ENCODE measurements at regions of chr22 and their contacts with region 1.

Region 1: DNA sequence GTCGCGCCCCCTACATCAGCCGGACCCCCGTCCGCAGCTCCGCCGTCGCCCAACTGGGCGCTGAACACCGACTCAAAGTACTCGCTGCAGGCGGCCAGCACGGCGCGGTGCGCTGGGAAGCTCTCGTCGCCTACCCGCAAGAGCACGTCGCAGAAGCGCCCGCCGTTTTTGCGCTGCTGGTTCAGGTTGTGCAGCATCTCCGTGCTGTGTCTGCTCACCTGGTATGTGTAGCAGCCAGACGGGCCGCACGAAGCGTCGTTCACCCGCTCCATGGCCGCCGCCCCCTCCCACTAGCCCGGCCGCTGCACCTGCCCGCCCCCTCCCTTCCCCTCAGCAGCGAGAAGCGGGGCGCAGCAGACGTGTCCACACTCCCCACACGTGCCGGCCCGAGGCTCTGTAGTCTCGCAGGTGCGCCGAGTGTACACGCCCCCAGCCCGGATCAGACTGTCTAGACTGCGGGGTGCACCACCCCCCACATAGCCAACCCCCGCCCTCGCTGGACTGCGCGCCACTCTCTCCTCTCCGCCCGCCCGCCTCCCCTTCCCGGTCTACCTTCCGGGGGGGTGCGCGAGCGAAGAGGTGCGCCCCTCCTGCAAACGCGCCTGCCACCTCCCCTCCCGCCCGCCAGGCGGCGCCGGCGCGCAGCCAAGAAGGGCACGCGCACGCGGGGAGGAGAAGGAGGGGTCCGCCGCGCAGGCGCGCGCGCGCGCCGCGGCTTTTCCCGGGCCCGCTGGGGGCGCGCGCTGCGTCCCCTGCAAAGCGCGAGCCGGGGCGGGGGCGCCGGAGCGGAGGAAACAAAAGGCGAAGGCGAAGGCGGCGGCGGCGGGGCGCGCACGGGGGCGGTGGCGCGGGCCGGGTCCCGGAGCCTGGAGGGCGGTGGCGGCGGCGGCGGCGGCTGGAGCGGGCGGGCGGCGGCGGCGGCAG is 553 bp downstream of the PATZ1 start:
- DNase-seq: peak; percentile 76
- H3K4me3 ChIP-seq: peak overlapping the region; percentile 49 to 59
- H3K27ac ChIP-seq: peak overlapping the region; percentile 87 to 90
- H3K4me1 ChIP-seq: peaks cover 27% of the 10 kb centered on the region
- H3K27me3 ChIP-seq: no peaks in the 10 kb centered on the region
- CTCF ChIP-seq: peak; percentile 89 to 97 (median 96)
- POLR2A ChIP-seq: peak; percentile 28

Region 2: DNA sequence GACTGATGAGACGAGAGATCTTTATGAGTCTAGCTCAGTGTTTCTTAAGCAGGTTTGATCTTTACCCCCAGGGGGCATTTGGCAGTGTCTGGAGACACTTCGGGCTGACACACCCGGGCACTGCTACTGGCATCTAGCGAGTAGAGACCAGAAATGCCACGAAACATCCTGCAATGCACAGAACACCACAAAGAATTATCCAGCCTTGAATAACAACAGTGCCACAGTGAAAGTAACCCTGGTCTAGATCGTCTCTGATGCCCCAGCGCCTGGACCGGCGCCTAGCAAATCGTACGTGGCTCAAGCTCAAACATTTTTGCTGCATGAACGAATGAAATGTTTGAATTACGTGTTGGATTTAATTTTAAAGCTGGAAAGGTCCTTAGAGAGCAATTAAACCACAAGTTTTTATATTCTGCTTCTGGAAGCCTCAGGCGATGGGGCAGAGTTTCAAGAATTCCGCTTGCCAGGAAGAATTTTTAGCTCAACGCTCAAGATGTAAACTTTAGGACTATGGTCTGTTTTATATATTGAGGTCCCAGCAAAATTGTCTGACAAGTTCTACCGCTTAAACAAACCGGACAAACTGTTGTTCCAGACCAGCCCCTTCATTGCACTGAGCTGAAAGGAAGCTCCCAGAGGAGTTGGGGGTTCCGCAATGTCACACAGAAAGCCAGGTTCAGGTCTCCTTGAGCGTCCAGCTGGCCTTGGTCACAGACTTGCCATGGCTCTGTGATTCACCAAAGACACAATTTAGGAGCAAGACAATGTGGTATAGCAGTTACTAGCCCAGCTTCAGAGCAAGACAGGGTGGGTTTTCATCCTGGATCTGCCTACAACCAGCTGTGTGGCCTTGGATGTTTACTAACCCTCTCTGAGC is 308.7 kb before region 1 on chr22:
- intact Hi-C with region 1: no loop called
- DNase-seq: no peak
- H3K4me3 ChIP-seq: peak overlapping the region in 1 of 2 donors; percentile 8
- H3K27ac ChIP-seq: peak overlapping the region; percentile 48 to 54
- H3K4me1 ChIP-seq: peaks cover 6% of the 10 kb centered on the region
- H3K27me3 ChIP-seq: no peaks in the 10 kb centered on the region
- CTCF ChIP-seq: no peak
- POLR2A ChIP-seq: no peak

Region 3: DNA sequence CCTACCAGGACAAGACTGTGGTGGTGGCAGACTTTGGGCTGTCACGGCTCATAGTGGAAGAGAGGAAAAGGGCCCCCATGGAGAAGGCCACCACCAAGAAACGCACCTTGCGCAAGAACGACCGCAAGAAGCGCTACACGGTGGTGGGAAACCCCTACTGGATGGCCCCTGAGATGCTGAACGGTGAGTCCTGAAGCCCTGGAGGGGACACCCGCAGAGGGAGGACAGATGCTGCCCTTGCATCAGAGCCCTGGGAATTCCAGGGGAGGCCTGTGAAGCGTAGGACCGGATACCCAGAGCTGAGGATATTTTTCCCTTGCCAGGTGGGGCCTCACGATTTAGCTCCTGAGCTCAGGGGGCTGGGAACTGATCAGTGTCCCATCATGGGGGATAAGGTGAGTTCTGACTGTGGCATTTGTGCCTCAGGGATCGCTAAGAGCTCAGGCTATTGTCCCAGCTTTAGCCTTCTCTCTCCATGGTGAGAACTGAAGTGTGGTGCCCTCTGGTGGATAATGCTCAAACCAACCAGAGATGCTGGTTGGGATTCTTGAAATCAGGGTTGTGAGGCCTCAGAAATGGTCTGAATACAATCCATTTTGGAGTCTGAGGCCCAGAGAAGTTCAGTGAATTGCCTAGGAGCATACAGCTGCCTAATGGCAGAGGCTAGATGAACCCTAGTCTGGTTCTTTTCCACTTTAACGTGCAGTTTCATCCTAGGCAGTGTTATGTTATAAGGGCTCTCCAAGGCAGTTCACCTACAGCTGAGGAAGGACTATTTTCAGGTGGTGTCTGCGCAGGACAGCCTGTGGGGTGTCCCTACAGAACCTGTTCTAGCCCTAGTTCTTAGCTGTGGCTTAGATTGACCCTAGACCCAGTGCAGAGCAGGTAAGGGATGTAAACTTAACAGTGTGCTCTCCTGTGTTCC is 72.8 kb before region 1 on chr22:
- intact Hi-C with region 1: no loop called
- DNase-seq: peak; percentile 58
- H3K4me3 ChIP-seq: no peak overlapping the region
- H3K27ac ChIP-seq: peak overlapping the region; percentile 52 to 63
- H3K4me1 ChIP-seq: no peaks in the 10 kb centered on the region
- H3K27me3 ChIP-seq: no peaks in the 10 kb centered on the region
- CTCF ChIP-seq: peak; percentile 29 to 80 (median 75)
- POLR2A ChIP-seq: no peak

Region 4: GRCh38 chr22:31302006-31302405 is 43.6 kb before region 1 on chr22:
- intact Hi-C with region 1: no loop called
- DNase-seq: peak; percentile 48
- H3K4me3 ChIP-seq: no peak overlapping the region
- H3K27ac ChIP-seq: no peak overlapping the region
- H3K4me1 ChIP-seq: no peaks in the 10 kb centered on the region
- H3K27me3 ChIP-seq: no peaks in the 10 kb centered on the region
- CTCF ChIP-seq: no peak
- POLR2A ChIP-seq: no peak

Region 5: GRCh38 chr22:31399211-31400028 is 53.8 kb after region 1 on chr22 and contains the start of gene DRG1:
- intact Hi-C with region 1: loop called (anchors 2 kb)
- DNase-seq: peak; percentile 95
- H3K4me3 ChIP-seq: peak within 1 kb of the TSS; percentile 64 to 75
- H3K27ac ChIP-seq: peak within 1 kb of the TSS; percentile 75 to 80
- H3K4me1 ChIP-seq: peaks cover 2% of the 10 kb centered on the region
- H3K27me3 ChIP-seq: no peaks in the 10 kb centered on the region
- CTCF ChIP-seq: peak in 3 of 4 experiments; percentile 18 to 64 (median 57)
- POLR2A ChIP-seq: peak; percentile 86
- total RNA-seq, gene DRG1: 61.6 to 82.1 TPM

Measured in prostate gland (tissue), 2 donors.